Activated T-helper 2 cell treated with anti-CD3 and anti-CD28 coated beads, Interferon-gamma antibody, Interleukin-2, Interleukin-4, amounts not matched to agents 10 μg/mL and 5 μg/mL and 100 μg/mL, durations not matched to agents 14 hours and 24 hours and 36 hours (primary cell): ENCODE measurements at regions of chr3 and their contacts with region 1.

Region 1: DNA sequence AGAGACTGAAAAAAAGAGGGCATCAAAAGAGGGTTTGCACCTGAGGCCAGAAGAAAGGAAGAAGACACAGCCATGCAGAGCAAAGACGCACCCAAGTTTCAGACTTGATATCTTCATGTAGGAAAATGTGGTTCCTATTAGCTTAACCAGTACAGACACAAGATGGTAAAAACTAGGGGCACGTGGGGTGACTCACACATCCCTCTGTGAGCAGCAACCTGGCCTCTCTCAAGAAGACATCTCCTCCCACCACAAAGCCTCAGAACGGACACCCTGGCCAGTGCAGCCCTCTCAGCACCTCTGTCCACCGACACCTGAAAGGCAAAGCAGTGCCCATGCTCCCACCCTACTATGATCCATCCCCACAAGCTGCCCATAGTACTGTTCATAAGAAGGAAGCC is 33.3 kb downstream of the GLB1 start:
- DNase-seq: peak; percentile 60
- H3K4me3 Mint-ChIP-seq: peak overlapping the region; percentile 9
- H3K27ac Mint-ChIP-seq: peak overlapping the region; percentile 83
- H3K4me1 Mint-ChIP-seq: peaks cover 67% of the 10 kb centered on the region
- H3K27me3 Mint-ChIP-seq: no peaks in the 10 kb centered on the region

Region 2: DNA sequence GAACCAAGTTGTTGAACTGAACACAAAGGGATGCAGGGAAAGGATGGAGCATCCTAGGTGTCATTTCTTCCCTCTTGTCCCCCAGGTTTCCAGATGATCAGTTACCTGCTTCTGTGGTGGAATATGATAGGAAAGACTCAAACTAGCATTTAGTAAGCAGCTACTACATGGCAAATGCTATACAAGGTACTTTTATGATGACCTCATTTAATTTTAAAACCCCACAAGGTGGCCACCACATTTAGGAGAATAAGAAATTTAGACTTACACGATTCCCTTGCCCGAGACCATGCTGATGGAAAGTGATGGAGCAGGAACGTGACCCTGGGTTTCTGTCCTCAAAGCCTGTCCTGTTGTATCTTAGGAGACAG is 71.3 kb before region 1 on chr3:
- intact Hi-C with region 1: loop called (anchors 1 kb)
- DNase-seq: no peak
- H3K4me3 Mint-ChIP-seq: peak overlapping the region; percentile 79
- H3K27ac Mint-ChIP-seq: peak overlapping the region; percentile 97
- H3K4me1 Mint-ChIP-seq: peaks cover 73% of the 10 kb centered on the region
- H3K27me3 Mint-ChIP-seq: no peaks in the 10 kb centered on the region

Region 3: DNA sequence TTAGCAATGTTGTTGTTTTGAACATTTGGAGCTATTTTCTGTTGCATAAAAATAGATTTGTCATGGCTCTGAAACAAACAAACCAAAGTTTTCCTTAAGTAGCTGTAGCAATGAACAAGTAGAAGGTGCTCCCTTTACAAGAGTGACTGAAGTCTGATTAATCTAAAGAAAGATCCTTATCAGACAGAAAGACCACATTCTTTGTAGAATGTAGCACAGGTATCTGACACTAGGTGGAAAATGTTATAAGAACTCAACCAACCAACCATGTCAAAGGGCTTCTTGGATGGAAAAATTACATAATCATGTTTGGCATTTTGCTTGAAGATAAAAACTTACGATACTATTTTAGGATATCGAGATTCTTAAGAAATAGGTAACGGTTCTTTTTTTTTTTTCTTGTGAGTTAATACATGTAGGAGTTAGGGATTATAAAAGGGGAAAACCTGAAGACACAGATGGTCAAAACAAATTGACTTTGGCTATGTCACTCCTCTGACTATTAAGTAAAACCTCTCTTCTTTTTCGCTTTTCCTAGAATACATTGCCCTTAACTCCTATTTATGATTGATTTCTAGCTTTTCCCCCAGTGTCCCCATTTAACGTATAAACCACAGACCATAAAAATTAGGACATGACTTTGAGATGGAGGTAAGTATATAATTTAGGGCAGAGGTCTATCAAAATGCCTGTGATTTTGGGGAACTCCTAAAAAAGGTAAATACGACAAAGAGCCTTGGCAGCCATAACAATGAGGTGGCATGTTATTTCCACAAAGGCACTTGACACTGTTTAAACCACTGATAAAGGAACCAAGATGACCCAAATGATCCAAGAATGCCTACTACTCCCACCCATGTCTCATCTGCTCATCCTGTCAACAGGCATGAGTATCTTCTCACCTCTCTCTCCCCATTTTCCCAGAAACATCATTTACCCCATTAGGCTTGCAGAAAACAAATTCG is 40.2 kb before region 1 on chr3:
- intact Hi-C with region 1: loop called (anchors 1 kb)
- DNase-seq: no peak
- H3K4me3 Mint-ChIP-seq: peak overlapping the region; percentile 14
- H3K27ac Mint-ChIP-seq: peak overlapping the region; percentile 89
- H3K4me1 Mint-ChIP-seq: peaks cover 54% of the 10 kb centered on the region
- H3K27me3 Mint-ChIP-seq: no peaks in the 10 kb centered on the region

Region 4: DNA sequence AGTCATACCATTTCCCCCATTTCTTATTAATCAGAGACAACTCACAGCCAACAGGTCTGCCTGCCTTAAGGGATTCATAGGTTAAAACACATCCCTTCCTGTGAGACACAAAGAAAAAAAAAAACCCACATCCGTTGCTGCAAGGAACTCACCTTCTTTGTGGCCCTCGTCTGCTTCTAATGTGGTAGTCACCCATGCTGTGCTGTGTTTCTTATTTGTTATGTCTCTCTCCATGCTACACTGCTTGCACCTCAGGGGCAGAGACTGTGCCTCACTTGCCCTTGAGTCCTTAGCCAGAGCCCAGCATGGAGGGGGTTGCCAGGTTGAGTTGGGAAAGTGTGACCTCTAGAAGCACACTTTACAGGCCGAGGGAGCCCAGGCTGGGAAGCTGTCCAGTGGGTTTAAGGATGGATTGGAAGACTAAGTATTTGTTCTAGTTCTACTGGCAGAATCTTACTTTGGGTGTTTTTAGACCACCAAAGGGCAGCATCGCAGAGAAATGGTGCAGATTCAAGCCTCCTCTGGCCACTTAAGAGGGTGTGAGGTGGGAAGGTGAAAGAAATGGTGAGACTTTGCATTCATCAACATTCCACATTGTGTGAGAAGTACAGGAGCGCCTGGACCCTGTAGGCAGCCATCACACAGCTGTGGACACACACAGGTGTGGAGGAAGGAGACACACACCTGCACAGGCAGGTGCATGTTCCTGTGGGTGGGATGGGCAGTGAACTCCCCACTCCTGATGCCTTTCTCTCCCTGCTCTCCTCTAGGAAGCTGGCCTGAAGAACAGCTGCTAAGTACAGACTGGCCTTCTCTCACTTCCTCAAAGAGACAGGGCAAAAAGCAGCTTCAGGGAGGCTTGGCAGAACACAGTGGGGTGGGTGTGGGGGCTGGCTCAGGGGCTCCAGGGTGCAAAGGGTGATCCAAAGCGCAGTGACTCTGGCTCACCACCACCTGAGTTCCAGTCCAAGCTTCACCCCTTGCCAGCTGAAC is 15.5 kb before region 1 on chr3:
- intact Hi-C with region 1: loop called (anchors 1 kb)
- DNase-seq: peak; percentile 62
- H3K4me3 Mint-ChIP-seq: peak overlapping the region; percentile 66
- H3K27ac Mint-ChIP-seq: peak overlapping the region; percentile 98
- H3K4me1 Mint-ChIP-seq: peaks cover 63% of the 10 kb centered on the region
- H3K27me3 Mint-ChIP-seq: no peaks in the 10 kb centered on the region

Region 5: DNA sequence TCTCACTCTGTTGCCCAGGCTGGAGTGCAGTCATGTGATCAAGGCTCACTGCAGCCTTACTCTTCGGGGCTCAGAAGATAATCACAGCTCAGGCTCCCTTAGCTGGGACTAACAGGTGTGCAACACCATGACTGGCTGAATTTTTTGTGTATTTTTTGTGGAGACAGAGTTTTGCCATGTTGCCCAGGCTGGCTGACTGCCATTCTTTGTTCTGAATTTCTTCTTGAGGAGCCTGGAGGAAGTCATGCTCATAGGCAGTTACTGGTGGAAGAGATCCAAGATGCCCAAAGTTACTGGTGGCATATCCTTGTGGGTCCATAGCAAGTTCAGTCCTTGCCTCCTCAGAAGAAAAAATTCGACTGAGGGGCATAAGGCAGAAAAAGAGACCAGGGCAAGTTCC is 393.1 kb after region 1 on chr3:
- intact Hi-C with region 1: no loop called
- DNase-seq: no peak
- H3K4me3 Mint-ChIP-seq: no peak overlapping the region
- H3K27ac Mint-ChIP-seq: no peak overlapping the region
- H3K4me1 Mint-ChIP-seq: peaks cover 3% of the 10 kb centered on the region
- H3K27me3 Mint-ChIP-seq: no peaks in the 10 kb centered on the region